ENCODE measurements at regions of chr5 and their contacts with region 1.

Region 1: DNA sequence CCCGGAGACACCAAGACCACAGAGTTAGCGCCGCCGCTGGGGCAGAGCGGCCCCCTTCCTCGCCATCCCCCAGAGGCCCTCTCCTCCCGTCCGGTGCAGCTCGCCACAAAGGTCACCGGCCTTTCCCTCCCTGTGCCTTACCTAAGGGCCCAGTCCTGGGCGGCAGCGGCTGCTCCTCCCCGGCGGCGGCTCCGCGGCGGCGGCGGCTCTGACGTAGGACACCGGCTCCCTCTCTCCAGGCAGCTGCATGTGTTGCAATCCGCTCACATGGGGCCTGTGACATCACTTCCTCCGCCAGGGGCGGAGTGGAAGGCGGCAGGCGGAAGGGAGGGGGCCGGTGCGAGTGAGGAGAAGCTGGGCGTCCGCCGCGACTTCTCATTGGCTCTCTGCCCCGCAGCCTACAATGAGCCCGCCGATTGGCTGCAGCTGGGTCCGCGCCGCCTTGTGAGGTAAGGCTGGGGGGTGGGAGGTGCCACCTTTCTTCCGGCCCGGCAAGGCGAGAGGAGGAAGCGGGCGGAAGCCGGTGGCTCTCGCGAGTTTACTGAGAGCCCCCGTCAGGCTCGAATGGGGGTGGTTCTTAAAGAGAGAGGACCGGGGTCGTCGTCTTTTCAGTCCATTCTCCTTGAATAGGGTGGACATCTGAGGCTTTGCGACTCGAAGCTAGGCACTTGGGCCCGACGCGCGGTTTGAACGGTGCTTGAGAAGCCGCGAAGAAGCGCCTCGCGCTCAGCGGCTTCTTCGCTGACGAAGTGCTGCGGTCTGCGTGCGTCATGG is at the start of gene ETF1:
- DNase-seq: peak; percentile 100
- H3K4me3 Mint-ChIP-seq: peak within 1 kb of the TSS; percentile 79
- H3K27ac Mint-ChIP-seq: peak within 1 kb of the TSS; percentile 97
- H3K4me1 Mint-ChIP-seq: peaks cover 32% of the 10 kb centered on the region
- H3K27me3 Mint-ChIP-seq: no peaks in the 10 kb centered on the region
- CTCF ChIP-seq: no peak
- total RNA-seq, gene ETF1: 307 and 349 TPM in 2 replicates

Region 2: GRCh38 chr5:138331449-138332368 is 211.4 kb before region 1 on chr5 and contains the start of gene CDC25C:
- CTCF ChIA-PET with region 1: no interaction called
- POLR2A ChIA-PET with region 1: interaction called, 9 read pairs
- intact Hi-C with region 1: loop called (anchors 10 kb)
- DNase-seq: peak; percentile 100
- H3K4me3 Mint-ChIP-seq: peak within 1 kb of the TSS; percentile 94
- H3K27ac Mint-ChIP-seq: peak within 1 kb of the TSS; percentile 87
- H3K4me1 Mint-ChIP-seq: peaks cover 37% of the 10 kb centered on the region
- H3K27me3 Mint-ChIP-seq: no peaks in the 10 kb centered on the region
- CTCF ChIP-seq: no peak
- total RNA-seq, gene CDC25C: 10.8 and 12.2 TPM in 2 replicates

Region 3: DNA sequence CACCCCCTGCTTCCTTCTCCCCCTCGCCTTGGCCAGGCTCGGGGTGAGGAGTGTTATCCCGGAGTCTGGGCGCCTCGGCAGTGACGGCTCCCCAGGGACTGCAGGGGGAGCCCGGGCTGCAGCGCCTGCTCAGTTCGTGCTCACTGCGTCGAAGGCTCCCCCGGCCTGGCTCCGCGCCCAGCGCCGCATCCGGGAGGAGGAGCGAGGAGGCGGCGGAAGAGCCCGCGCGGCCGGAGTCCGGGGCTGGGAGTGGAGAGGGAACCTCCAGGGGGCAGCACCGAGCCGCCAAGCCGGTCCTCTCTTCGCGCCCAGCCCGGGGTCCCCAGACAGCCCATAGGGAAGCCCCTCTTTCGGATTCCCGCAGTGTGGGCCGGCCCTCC is 79.1 kb before region 1 on chr5:
- CTCF ChIA-PET with region 1: interaction called, 111 read pairs
- POLR2A ChIA-PET with region 1: interaction called, 219 read pairs
- intact Hi-C with region 1: loop called (anchors 1 kb)
- DNase-seq: peak; percentile 98
- H3K4me3 Mint-ChIP-seq: peak overlapping the region; percentile 78
- H3K27ac Mint-ChIP-seq: peak overlapping the region; percentile 93
- H3K4me1 Mint-ChIP-seq: peaks cover 45% of the 10 kb centered on the region
- H3K27me3 Mint-ChIP-seq: peaks cover 20% of the 10 kb centered on the region
- CTCF ChIP-seq: peak; percentile 97

Region 4: DNA sequence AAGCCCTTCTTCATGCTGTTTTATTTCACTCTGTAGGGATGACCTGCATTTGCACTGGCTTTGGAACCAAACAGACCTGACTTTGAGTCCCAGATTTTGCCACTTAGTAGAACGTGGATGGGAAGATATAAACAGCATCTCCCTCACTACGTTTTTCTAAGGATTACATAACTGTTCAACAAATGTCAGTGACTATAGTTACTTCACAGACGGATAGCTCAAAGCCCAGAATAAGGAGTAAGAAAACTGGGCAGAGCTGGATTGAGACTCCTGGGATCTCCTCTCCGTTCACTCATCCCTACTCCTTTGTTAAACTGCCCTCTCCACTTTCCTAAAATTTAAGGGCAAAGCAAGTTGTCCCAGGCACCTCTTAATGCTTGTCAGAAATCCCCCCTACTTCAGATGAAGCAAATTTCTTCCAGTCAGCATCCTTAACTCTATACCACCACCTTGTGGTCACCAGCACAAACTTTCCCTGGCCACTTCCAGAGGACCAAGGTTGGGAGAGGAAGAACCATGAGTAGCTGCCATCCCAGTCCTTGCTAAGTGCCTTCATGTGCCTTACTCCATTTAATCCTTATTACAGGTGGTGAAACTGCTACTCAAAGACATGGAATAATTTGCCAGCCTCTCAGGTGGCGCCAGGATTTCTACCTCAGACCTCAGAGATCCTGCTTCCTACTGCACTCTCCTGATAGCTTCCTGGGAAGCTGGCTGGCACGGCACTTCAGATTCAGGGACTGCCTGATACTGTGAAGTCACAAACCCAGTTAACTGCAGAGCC is 39.5 kb before region 1 on chr5:
- CTCF ChIA-PET with region 1: interaction called, 124 read pairs
- POLR2A ChIA-PET with region 1: interaction called, 276 read pairs
- intact Hi-C with region 1: loop called (anchors 2 kb)
- DNase-seq: peak; percentile 86
- H3K4me3 Mint-ChIP-seq: no peak overlapping the region
- H3K27ac Mint-ChIP-seq: no peak overlapping the region
- H3K4me1 Mint-ChIP-seq: peaks cover 58% of the 10 kb centered on the region
- H3K27me3 Mint-ChIP-seq: no peaks in the 10 kb centered on the region
- CTCF ChIP-seq: peak; percentile 79

Region 5: GRCh38 chr5:138559937-138560336 is 16.8 kb after region 1 on chr5:
- CTCF ChIA-PET with region 1: interaction called, 8 read pairs
- POLR2A ChIA-PET with region 1: interaction called, 22 read pairs
- intact Hi-C with region 1: no loop called
- DNase-seq: no peak
- H3K4me3 Mint-ChIP-seq: no peak overlapping the region
- H3K27ac Mint-ChIP-seq: no peak overlapping the region
- H3K4me1 Mint-ChIP-seq: peaks cover 7% of the 10 kb centered on the region
- H3K27me3 Mint-ChIP-seq: no peaks in the 10 kb centered on the region
- CTCF ChIP-seq: no peak

Region 6: GRCh38 chr5:138654281-138654867 is 111.2 kb after region 1 on chr5:
- CTCF ChIA-PET with region 1: no interaction called
- POLR2A ChIA-PET with region 1: no interaction called
- intact Hi-C with region 1: no loop called
- DNase-seq: no peak
- H3K4me3 Mint-ChIP-seq: no peak overlapping the region
- H3K27ac Mint-ChIP-seq: no peak overlapping the region
- H3K4me1 Mint-ChIP-seq: no peaks in the 10 kb centered on the region
- H3K27me3 Mint-ChIP-seq: no peaks in the 10 kb centered on the region
- CTCF ChIP-seq: no peak

Region 7: DNA sequence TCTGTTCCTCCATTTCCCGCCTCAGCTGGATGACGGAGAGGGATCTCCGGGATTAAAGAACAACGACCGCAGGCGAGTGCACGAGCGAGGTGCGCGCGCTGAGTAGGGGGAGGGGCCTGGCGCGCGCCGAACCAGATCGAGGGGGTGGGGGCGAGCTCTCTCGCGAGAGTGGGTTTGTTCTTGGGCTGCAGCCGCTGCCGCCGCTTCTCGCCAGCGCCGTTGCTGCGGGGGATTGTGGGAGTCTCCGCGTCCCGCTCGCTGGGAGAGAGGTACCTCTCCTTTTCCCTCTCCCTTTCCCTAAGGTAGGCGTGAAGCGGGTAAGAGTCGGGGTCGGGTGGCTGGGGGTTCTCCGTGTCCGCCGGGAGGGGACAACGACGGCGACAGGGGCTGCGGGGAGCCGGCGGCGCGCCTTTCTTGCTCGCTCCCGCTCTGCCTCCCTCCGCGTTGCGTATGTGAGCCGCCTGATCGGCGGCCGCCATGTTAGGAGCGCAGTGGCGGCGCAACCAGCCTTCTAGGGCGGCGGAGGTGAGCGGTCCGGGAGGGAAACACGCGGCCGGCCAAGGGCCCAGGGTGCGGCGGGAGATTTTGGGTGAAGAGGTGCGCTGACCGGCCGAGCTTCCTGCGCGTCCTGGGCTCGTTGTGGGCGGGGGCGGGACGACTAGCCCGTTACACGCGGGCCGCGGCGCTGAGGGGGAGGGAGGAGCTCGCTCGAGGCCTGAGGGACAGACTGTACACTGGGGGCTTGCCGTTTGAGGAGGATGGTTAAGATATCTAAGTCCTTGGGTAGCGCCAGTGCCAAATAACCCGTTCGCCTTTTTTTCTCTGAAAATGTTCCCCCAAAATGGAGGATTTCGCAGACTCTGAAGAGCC is 750.6 kb after region 1 on chr5 and contains the start of gene MATR3:
- CTCF ChIA-PET with region 1: interaction called, 3 read pairs
- POLR2A ChIA-PET with region 1: interaction called, 14 read pairs
- intact Hi-C with region 1: no loop called
- DNase-seq: peak; percentile 98
- H3K4me3 Mint-ChIP-seq: peak within 1 kb of the TSS; percentile 94
- H3K27ac Mint-ChIP-seq: peak within 1 kb of the TSS; percentile 99
- H3K4me1 Mint-ChIP-seq: peaks cover 37% of the 10 kb centered on the region
- H3K27me3 Mint-ChIP-seq: no peaks in the 10 kb centered on the region
- CTCF ChIP-seq: no peak
- total RNA-seq, gene MATR3: 152 and 159 TPM in 2 replicates